ENCODE measurements at regions of chr4 and their contacts with region 1.

Region 1: DNA sequence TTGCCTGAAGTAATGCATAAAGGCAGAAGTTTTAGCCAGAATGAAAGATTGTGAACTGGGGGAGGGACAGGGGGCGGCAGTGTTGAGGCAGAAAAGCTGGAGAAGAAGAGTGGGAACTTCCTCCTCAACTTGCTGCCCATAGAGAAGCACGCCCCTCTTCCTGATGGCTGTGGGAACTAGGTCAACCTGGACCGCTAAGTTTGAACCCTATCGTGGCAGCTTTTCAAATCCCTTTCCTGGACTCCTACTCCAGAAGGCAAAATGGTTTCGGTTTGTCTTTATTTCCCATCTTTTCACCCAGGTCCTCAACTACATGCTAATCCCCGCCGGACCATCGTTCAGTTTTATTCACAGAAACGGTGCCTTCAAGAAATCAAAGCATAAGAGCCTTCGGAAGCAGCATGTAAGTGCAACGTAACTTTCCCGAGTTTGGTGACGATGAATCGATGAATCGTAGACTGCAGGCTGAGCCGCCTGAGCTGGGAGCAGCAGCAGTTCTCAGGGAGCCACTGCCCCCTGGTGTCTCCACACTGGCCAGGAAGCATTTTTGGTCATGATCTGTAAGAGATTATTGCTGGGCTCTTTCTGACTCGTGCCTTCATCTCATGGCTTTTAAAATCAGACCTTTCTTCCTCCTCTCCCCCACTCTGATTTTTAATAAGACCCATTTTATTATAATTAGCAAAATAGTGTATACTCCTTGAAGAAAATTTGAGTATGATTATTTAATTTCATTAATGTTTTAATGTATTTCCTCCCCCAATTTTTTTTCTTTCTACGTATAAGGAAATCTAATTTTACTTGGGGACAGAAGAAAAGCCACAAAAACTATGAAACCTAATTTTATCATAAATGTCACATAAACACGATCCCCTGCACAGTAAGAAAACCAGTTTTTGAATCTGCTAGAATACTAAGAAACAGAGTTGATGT is 21.4 kb downstream of the SPINK2 start:
- DNase-seq: peak; percentile 72
- H3K4me3 ChIP-seq: peak overlapping the region; percentile 52
- H3K27ac ChIP-seq: no peak overlapping the region
- H3K4me1 ChIP-seq: no peaks in the 10 kb centered on the region
- H3K27me3 ChIP-seq: no peaks in the 10 kb centered on the region
- CTCF ChIP-seq: peak; percentile 69

Region 2: DNA sequence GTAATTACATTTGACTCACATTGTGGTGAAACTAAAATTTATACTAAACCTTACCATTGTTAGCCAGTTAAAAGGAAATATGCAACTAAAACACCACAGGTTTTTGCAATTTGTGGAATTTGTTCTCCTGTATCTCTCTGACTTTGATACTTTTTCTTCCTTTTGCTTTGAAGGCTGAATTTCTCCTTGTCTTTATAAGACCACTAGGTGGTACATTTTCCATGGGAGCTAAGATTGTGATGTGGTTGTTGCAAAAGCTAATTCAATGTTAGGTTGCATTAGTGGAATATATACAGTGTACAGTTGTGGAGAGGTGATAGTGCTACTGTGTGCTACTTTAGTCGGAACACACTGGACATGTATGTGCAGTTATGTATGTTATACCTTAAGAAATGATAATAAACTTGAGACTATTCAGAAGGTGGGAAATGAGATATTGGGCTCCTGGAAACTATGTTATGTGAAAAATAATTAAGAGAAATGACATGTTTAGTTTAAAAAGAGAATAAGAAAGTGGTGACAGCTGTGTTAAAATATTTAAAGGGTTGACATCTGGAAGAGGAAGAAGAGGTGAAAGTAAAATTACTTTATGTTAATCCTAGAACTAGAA is 224.2 kb before region 1 on chr4:
- CTCF ChIA-PET with region 1: interaction called, 3 read pairs
- POLR2A ChIA-PET with region 1: no interaction called
- intact Hi-C with region 1: loop called (anchors 10 kb)
- DNase-seq: no peak
- H3K4me3 ChIP-seq: no peak overlapping the region
- H3K27ac ChIP-seq: no peak overlapping the region
- H3K4me1 ChIP-seq: no peaks in the 10 kb centered on the region
- H3K27me3 ChIP-seq: no peaks in the 10 kb centered on the region
- CTCF ChIP-seq: peak; percentile 38

Region 3: DNA sequence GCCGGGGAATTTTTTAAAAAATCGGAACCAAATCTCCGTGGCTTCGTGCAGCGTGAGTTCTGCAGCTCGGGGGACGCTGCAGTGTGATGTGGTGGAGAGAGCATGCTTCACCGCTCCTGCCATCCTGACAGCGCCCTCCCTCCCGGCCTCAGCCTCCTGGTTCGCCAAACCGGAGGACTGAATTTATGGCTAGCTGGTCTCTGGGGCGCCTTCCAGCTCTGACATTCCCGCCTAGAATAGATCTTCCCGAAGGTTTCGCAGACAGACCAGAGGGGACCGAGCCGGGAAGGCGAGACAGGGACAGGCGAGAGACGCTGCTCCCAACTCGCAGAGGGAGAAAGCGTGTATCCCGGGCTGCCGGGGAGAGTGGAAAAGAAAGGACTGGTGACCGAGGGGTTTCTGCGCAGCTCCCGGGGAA is 144.9 kb before region 1 on chr4:
- CTCF ChIA-PET with region 1: no interaction called
- POLR2A ChIA-PET with region 1: no interaction called
- intact Hi-C with region 1: no loop called
- DNase-seq: no peak
- H3K4me3 ChIP-seq: peak overlapping the region; percentile 25
- H3K27ac ChIP-seq: no peak overlapping the region
- H3K4me1 ChIP-seq: no peaks in the 10 kb centered on the region
- H3K27me3 ChIP-seq: peaks cover 50% of the 10 kb centered on the region
- CTCF ChIP-seq: no peak

Measured in A673 (cell line).